Activated CD4-positive, alpha-beta T cell treated with anti-CD3 and anti-CD28 coated beads for 36 hours (primary cell): ENCODE measurements at regions of chr7 and their contacts with region 1.

Region 1: GRCh38 chr7:92528188-92528957 is at the starts of genes PEX1 and RBM48:
- DNase-seq: peak; percentile 98
- ATAC-seq: peak; percentile 95
- H3K4me3 Mint-ChIP-seq: peak within 1 kb of the TSS; percentile 90
- H3K27ac Mint-ChIP-seq: peak within 1 kb of the TSS; percentile 93
- H3K4me1 Mint-ChIP-seq: peaks cover 29% of the 10 kb centered on the region
- H3K27me3 Mint-ChIP-seq: no peaks in the 10 kb centered on the region
- total RNA-seq, gene PEX1: 14.7 to 16.0 TPM
- total RNA-seq, gene RBM48: 12.8 to 13.1 TPM

Region 2: GRCh38 chr7:91880413-91881241 is 647.7 kb before region 1 on chr7 and contains the start of gene MTERF1:
- CTCF ChIA-PET with region 1: no interaction called
- POLR2A ChIA-PET with region 1: interaction called, 3 read pairs
- intact Hi-C with region 1: loop called in 1 of 2 experiments (anchors 1 kb)
- DNase-seq: peak; percentile 97
- ATAC-seq: peak; percentile 98
- H3K4me3 Mint-ChIP-seq: peak within 1 kb of the TSS; percentile 92
- H3K27ac Mint-ChIP-seq: peak within 1 kb of the TSS; percentile 94
- H3K4me1 Mint-ChIP-seq: peaks cover 29% of the 10 kb centered on the region
- H3K27me3 Mint-ChIP-seq: no peaks in the 10 kb centered on the region
- total RNA-seq, gene MTERF1: 16.7 to 16.9 TPM

Region 3: GRCh38 chr7:92134271-92135051 is 393.9 kb before region 1 on chr7 and contains the start of gene CYP51A1:
- CTCF ChIA-PET with region 1: interaction called, 4 read pairs
- POLR2A ChIA-PET with region 1: interaction called, 3 read pairs
- intact Hi-C with region 1: loop called in 1 of 2 experiments (anchors 1 kb)
- DNase-seq: peak; percentile 94
- ATAC-seq: peak; percentile 92
- H3K4me3 Mint-ChIP-seq: peak within 1 kb of the TSS; percentile 98
- H3K27ac Mint-ChIP-seq: peak within 1 kb of the TSS; percentile 99
- H3K4me1 Mint-ChIP-seq: peaks cover 20% of the 10 kb centered on the region
- H3K27me3 Mint-ChIP-seq: no peaks in the 10 kb centered on the region
- total RNA-seq, gene CYP51A1: 57.8 to 63.3 TPM

Region 4: DNA sequence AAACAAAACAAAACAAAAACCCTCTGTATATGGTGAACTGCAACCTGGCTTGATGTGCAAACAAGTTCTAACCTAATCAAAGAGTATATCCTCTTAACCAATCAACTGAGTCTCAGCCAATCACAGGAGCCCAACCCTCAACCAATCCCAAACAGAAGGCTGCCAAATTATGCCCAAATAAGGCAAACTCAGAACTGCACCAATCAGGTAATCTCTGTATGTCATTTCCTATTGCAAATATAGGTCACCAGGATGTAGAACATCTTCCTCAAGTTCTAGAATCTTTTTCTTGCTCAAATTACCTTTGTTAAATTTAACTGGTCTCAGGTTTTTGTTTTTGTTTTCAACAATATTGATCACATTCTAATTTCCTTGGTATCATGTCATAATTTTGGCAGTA is 56.6 kb after region 1 on chr7:
- CTCF ChIA-PET with region 1: interaction called, 8 read pairs
- POLR2A ChIA-PET with region 1: interaction called, 7 read pairs
- intact Hi-C with region 1: loop called (anchors 1 to 2 kb)
- DNase-seq: peak; percentile 20
- ATAC-seq: peak; percentile 20
- H3K4me3 Mint-ChIP-seq: no peak overlapping the region
- H3K27ac Mint-ChIP-seq: peak overlapping the region; percentile 83
- H3K4me1 Mint-ChIP-seq: peaks cover 65% of the 10 kb centered on the region
- H3K27me3 Mint-ChIP-seq: no peaks in the 10 kb centered on the region

Region 5: GRCh38 chr7:93036807-93037206 is 508.4 kb after region 1 on chr7:
- CTCF ChIA-PET with region 1: no interaction called
- POLR2A ChIA-PET with region 1: no interaction called
- intact Hi-C with region 1: loop called in 1 of 2 experiments (anchors 5 kb)
- DNase-seq: peak; percentile 67
- ATAC-seq: peak; percentile 97
- H3K4me3 Mint-ChIP-seq: no peak overlapping the region
- H3K27ac Mint-ChIP-seq: peak overlapping the region; percentile 74
- H3K4me1 Mint-ChIP-seq: peaks cover 20% of the 10 kb centered on the region
- H3K27me3 Mint-ChIP-seq: no peaks in the 10 kb centered on the region

Region 6: GRCh38 chr7:93117852-93118530 is 589.6 kb after region 1 on chr7 and contains the start of gene SAMD9:
- CTCF ChIA-PET with region 1: interaction called, 3 read pairs
- POLR2A ChIA-PET with region 1: no interaction called
- intact Hi-C with region 1: loop called in 1 of 2 experiments (anchors 5 kb)
- DNase-seq: peak; percentile 65
- ATAC-seq: peak; percentile 89
- H3K4me3 Mint-ChIP-seq: peak within 1 kb of the TSS; percentile 78
- H3K27ac Mint-ChIP-seq: peak within 1 kb of the TSS; percentile 88
- H3K4me1 Mint-ChIP-seq: peaks cover 49% of the 10 kb centered on the region
- H3K27me3 Mint-ChIP-seq: no peaks in the 10 kb centered on the region
- total RNA-seq, gene SAMD9: 10.2 to 10.7 TPM